Gastrocnemius medialis (tissue), 4 donors: ENCODE measurements at regions of chr9 and their contacts with region 1.

Region 1: GRCh38 chr9:35161713-35162604 is at the start of gene UNC13B:
- DNase-seq: peak; percentile 94 to 96
- ATAC-seq: peak; percentile 91 to 93
- H3K4me3 ChIP-seq: peak within 1 kb of the TSS; percentile 77 to 93 (median 86)
- H3K27ac ChIP-seq: peak within 1 kb of the TSS; percentile 92 to 99 (median 96)
- H3K4me1 ChIP-seq: peaks cover 23 to 35% of the 10 kb centered on the region in 2 donors
- H3K27me3 ChIP-seq: no peaks in the 10 kb centered on the region
- CTCF ChIP-seq: peak in 3 of 5 experiments; percentile 12 to 32 (median 31)
- POLR2A ChIP-seq: peak; percentile 76 to 91
- total RNA-seq, gene UNC13B: 7.5 to 17.5 (median 13.1) TPM

Region 2: GRCh38 chr9:34001298-34001697 is 1160.7 kb before region 1 on chr9:
- in situ Hi-C with region 1: no loop called
- intact Hi-C with region 1: no loop called
- DNase-seq: peak in 1 of 2 donors; percentile 45
- ATAC-seq: peak; percentile 60 to 97
- H3K4me3 ChIP-seq: no peak overlapping the region
- H3K27ac ChIP-seq: peak overlapping the region; percentile 35 to 55 (median 53)
- H3K4me1 ChIP-seq: peaks cover 6 to 14% of the 10 kb centered on the region in 2 donors
- H3K27me3 ChIP-seq: no peaks in the 10 kb centered on the region
- CTCF ChIP-seq: no peak
- POLR2A ChIP-seq: no peak

Region 3: DNA sequence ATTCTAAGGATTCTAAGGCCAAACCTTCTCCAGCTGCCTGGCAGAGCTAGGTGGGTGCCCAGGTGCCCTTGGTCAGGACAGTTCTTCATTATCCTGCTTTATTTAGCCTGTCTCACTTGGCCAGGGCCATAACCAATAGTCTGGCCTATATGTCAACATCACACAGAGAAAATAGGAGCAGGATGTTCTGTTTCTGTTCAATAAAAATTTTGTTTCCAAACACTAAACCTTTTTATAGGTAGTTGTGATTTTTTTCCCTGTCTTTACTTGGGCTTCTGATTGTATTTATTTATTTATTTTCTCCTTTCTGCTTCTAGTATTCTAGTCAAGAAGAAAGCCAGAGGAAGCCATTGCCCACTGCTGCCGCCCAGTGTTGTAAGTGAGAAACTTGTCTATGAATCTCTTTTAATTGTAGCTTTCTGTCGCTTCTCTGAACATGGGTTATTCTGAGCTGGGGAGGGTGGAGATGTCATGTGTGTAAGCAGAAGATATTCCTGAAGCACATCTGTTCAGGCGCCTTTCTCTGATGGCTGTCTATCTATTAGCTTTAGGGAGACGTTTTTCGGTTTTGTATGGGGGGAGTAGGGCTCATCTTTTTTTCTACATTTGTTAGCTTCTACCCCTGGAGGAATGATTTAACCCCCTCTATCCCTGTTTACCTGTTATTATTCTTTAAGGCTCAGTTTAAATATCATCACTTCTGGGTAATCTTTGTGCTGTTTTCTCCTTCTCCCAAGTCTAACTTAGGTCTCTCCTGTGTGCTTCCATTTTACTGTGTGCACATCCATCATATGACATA is 96.9 kb after region 1 on chr9:
- in situ Hi-C with region 1: no loop called
- intact Hi-C with region 1: loop called (anchors 2 kb)
- DNase-seq: peak; percentile 46 to 70
- ATAC-seq: peak; percentile 84 to 89
- H3K4me3 ChIP-seq: no peak overlapping the region
- H3K27ac ChIP-seq: peak overlapping the region in 3 of 4 donors; percentile 3 to 47 (median 25)
- H3K4me1 ChIP-seq: peaks cover 10 to 17% of the 10 kb centered on the region in 2 donors
- H3K27me3 ChIP-seq: no peaks in the 10 kb centered on the region
- CTCF ChIP-seq: peak; percentile 53 to 76 (median 69)
- POLR2A ChIP-seq: no peak

Region 4: DNA sequence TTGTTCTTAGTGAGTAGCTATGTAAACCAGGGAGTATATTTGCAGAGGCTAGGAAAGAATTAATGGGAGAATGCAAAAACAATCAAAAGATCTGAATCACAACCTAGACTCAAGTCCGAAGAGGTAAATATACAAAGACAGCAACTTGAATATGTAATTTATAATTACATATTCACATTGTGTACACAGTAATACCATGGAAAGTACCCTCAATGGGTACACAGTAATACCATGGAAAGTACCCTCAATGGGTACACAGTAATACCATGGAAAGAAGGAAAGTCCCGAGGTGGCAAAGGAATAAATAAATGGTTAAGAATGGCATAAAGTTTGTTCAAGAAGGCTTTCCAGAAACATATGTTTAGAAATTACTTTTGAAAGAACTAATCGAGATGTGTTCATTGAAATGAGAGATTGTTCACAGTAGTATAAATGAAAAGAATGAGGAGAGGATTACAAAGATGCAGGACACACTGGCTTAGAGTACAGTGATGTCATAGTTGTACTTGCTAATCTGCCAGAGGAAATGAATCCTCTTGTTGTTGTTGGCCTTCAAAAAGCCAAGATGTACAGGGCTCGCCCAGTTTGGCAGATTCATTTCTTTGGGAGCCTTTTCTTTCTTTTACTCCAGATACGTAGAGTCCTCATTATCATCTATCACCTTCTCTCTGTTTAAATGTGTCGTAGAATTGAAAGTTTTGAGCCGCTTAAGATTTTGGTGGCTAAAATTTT is 115.8 kb after region 1 on chr9:
- in situ Hi-C with region 1: no loop called
- intact Hi-C with region 1: loop called (anchors 5 kb)
- DNase-seq: peak in 1 of 2 donors; percentile 15
- ATAC-seq: peak; percentile 92 to 98
- H3K4me3 ChIP-seq: no peak overlapping the region
- H3K27ac ChIP-seq: peak overlapping the region; percentile 68 to 78 (median 70)
- H3K4me1 ChIP-seq: peaks cover 41 to 49% of the 10 kb centered on the region in 2 donors
- H3K27me3 ChIP-seq: no peaks in the 10 kb centered on the region
- CTCF ChIP-seq: no peak
- POLR2A ChIP-seq: no peak

Region 5: GRCh38 chr9:35374910-35375309 is 213.0 kb after region 1 on chr9:
- in situ Hi-C with region 1: no loop called
- intact Hi-C with region 1: loop called (anchors 5 kb)
- DNase-seq: peak; percentile 84 to 90
- ATAC-seq: peak; percentile 97 to 99
- H3K4me3 ChIP-seq: no peak overlapping the region
- H3K27ac ChIP-seq: peak overlapping the region; percentile 74 to 89 (median 83)
- H3K4me1 ChIP-seq: peaks cover 12 to 18% of the 10 kb centered on the region in 2 donors
- H3K27me3 ChIP-seq: no peaks in the 10 kb centered on the region
- CTCF ChIP-seq: no peak
- POLR2A ChIP-seq: peak in 1 of 2 donors; percentile 16